ENCODE measurements at regions of chr11 and their contacts with region 1.

Region 1: GRCh38 chr11:78715639-78716311 is 141.1 kb upstream of the NARS2 start:
- DNase-seq: peak in 1 of 3 donors; percentile 20
- ATAC-seq: peak in 1 of 2 donors; percentile 36
- H3K4me3 ChIP-seq: no peak overlapping the region
- H3K27ac ChIP-seq: no peak overlapping the region
- H3K4me1 ChIP-seq: no peaks in the 10 kb centered on the region
- H3K27me3 ChIP-seq: no peaks in the 10 kb centered on the region

Region 2: GRCh38 chr11:78659326-78660270 is 56.2 kb before region 1 on chr11:
- intact Hi-C with region 1: loop called in 1 of 4 experiments (anchors 10 kb)
- DNase-seq: no peak
- ATAC-seq: no peak
- H3K4me3 ChIP-seq: no peak overlapping the region
- H3K27ac ChIP-seq: no peak overlapping the region
- H3K4me1 ChIP-seq: no peaks in the 10 kb centered on the region
- H3K27me3 ChIP-seq: no peaks in the 10 kb centered on the region

Measured in right cardiac atrium (tissue), 5 donors.